ENCODE measurements at regions of chr5 and their contacts with region 1.

Region 1: GRCh38 chr5:127492854-127493738 is 24.3 kb upstream of the PRRC1 start:
- DNase-seq: no peak
- H3K4me3 ChIP-seq: no peak overlapping the region
- CTCF ChIP-seq: peak; percentile 49

Region 2: DNA sequence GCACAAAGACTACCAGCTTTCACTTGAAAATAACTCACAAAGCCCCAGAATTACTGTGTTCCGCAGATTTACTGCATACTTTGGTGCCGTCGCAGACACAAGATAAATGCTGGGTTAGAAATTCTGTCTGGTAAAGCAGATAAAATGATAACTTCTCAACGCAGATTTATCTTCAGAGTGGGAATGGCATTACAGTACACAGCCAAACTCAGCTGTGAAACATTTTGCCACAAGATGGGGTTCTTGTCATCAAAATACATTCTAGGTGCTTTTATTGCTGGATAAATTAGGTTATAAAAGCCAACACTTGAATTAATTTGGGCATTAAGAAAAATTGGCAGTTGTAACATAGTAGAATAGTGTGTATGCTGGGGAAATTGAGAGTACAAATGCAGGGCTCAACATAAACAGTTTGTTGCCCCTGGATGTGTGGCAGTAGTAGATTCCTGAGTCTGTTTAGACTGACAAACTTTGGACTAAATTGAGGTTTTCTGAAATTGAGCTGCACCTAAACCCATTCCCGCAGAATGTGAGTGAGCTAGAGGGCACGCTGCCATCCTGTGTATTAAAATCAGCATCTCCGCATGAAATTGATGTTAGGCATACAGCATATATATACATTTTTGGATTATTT is 655.1 kb before region 1 on chr5:
- CTCF ChIA-PET with region 1: interaction called, 18 read pairs
- POLR2A ChIA-PET with region 1: no interaction called
- DNase-seq: no peak
- H3K4me3 ChIP-seq: no peak overlapping the region
- CTCF ChIP-seq: peak; percentile 39

Region 3: GRCh38 chr5:127290019-127290945 is 202.8 kb before region 1 on chr5 and contains the start of gene MEGF10:
- CTCF ChIA-PET with region 1: interaction called, 57 read pairs
- POLR2A ChIA-PET with region 1: no interaction called
- DNase-seq: no peak
- H3K4me3 ChIP-seq: peak within 1 kb of the TSS; percentile 44
- CTCF ChIP-seq: peak; percentile 77

Region 4: GRCh38 chr5:127452626-127453025 is 40.5 kb before region 1 on chr5:
- CTCF ChIA-PET with region 1: interaction called, 10 read pairs
- POLR2A ChIA-PET with region 1: no interaction called
- DNase-seq: no peak
- H3K4me3 ChIP-seq: no peak overlapping the region
- CTCF ChIP-seq: no peak

Region 5: GRCh38 chr5:127471211-127471610 is 21.9 kb before region 1 on chr5:
- CTCF ChIA-PET with region 1: interaction called, 18 read pairs
- POLR2A ChIA-PET with region 1: no interaction called
- DNase-seq: no peak
- H3K4me3 ChIP-seq: no peak overlapping the region
- CTCF ChIP-seq: no peak

Region 6: DNA sequence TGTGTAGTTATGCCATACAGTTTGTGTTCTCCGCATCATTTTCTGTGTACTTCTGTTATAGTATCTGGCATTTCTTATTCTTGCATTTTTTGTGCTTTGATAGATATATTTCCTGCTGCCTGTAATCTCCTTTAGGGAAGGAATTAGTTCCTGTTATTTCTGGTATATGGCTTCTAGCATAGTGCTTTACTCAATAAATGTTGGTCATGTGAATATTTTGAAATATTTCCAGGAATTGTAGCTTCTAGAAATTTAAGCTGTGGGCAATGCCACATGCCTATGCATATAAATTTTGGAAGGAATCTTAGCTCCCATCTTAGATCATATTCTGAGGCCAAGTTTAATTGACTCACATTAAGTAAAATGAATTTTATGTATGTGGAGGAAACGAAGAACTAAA is 12.8 kb after region 1 on chr5:
- CTCF ChIA-PET with region 1: interaction called, 22 read pairs
- POLR2A ChIA-PET with region 1: no interaction called
- DNase-seq: no peak
- H3K4me3 ChIP-seq: no peak overlapping the region
- CTCF ChIP-seq: no peak

Region 7: DNA sequence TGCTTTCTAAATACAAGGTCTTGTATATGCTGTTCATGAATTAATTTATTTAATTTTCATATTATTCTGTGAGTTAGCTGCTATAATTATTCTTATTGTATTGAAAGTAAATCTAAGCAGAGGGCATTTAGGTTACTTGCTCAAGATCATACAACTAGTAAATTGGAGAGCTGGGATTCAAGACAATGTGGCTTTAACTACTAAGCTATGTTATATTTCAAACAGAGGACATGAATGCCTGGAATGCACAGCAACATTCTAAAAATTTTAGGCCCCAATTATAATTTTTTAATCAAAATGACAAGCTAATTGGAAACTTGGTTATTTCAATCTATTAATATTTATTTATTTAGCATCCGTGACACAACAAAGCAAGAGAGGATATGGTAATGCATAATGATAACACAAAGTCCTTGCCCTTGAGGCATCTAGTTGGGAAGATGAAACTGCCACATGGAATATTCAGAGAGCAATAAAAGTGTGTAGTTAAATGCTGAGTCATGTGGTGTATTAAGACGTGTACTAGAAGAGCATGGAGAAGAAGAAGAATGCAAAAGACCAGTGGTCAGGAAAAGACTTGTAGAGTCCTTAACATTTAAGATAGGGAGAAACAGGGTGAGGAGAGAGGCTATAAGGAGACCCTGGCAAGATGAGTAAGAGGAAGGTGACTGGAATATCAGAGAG is 180.2 kb after region 1 on chr5:
- CTCF ChIA-PET with region 1: no interaction called
- POLR2A ChIA-PET with region 1: no interaction called
- DNase-seq: no peak
- H3K4me3 ChIP-seq: no peak overlapping the region
- CTCF ChIP-seq: no peak

Measured in AG04449 (cell line).